Left cardiac atrium (tissue), 4 donors: ENCODE measurements at regions of chrX and their contacts with region 1.

Region 1: GRCh38 chrX:138745196-138745595 is 33.7 kb upstream of the FGF13 start:
- DNase-seq: no peak
- ATAC-seq: peak in 1 of 2 donors; percentile 34

Region 2: GRCh38 chrX:138128027-138128671 is 617.0 kb before region 1 on chrX:
- intact Hi-C with region 1: loop called in 1 of 2 experiments (anchors 5 kb)
- DNase-seq: no peak
- ATAC-seq: no peak

Region 3: GRCh38 chrX:138191998-138192397 is 553.2 kb before region 1 on chrX:
- intact Hi-C with region 1: loop called in 1 of 2 experiments (anchors 2 kb)
- DNase-seq: no peak
- ATAC-seq: no peak

Region 4: DNA sequence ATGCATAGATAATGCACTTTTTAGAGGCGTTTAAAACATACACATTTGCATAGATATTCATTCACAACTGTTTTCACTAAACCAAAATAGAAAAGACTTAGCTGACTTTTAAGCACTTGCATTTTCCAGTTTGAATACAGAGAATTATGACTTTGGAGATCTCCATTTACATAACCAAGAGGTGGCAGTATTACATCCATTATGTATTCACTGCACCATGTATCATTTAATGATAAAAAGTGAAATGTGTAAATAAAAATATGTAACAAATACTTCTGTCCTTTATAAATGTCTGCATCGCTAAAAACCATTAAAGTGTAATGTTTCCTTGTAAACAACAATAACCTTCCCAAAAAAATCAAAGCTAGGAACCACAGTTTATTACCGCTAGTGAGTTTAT is 446.9 kb before region 1 on chrX:
- intact Hi-C with region 1: loop called in 1 of 2 experiments (anchors 5 kb)
- DNase-seq: no peak
- ATAC-seq: no peak